ENCODE measurements at regions of chr6 and their contacts with region 1.

Region 1: GRCh38 chr6:97497713-97498331 is 214.8 kb upstream of the MMS22L start:
- DNase-seq: peak; percentile 56
- H3K4me3 ChIP-seq: no peak overlapping the region
- H3K27ac ChIP-seq: no peak overlapping the region
- H3K4me1 ChIP-seq: no peaks in the 10 kb centered on the region
- H3K27me3 ChIP-seq: no peaks in the 10 kb centered on the region
- CTCF ChIP-seq: peak in 3 of 4 experiments; percentile 57 to 68 (median 60)
- POLR2A ChIP-seq: no peak

Region 2: GRCh38 chr6:97535800-97536199 is 38.0 kb after region 1 on chr6:
- intact Hi-C with region 1: no loop called
- DNase-seq: no peak
- H3K4me3 ChIP-seq: no peak overlapping the region
- H3K27ac ChIP-seq: no peak overlapping the region
- H3K4me1 ChIP-seq: no peaks in the 10 kb centered on the region
- H3K27me3 ChIP-seq: no peaks in the 10 kb centered on the region
- CTCF ChIP-seq: no peak
- POLR2A ChIP-seq: no peak

Region 3: DNA sequence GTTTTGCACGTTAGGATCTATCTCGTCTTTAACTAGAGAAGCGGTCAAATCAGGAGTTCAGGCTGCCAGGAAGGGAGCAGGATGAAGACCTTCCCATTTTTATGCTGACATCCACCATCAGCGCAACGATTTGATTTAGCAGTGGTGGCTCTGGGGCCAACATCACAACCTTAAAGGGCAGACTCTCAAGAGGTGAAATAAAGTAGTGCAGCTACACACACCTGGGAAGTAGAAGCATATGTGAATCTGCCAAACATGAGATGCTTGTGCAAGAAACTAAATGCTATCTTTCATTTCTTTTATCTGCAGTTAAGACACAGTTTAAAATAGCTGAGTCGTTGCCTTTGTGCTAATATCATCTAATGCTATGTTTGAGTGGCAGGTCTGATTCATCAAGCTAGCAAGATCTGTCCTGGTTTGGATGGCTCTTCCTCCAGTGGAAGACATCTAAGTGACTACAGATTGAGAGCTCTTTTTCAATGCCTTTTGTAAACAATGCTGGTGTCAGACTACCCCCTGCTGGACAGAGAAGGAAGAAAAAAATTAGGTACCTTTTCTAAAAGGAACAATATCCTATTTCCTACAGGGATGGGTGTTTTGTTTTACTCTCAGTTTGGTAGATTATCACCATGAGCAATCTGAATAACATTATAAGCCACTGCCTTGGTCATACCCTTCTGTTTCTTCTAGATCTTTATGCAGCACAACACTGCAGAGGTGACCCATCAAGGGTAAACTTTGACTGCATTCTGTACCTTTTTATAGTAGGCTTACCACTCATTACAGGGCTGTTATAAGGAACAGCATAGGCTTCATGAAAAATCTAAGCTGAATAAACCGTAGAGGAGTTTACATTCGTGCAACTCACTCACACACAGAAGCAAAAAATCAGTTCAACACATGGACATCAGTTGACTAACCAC is 1621.5 kb after region 1 on chr6:
- intact Hi-C with region 1: loop called (anchors 10 kb)
- DNase-seq: peak; percentile 13
- H3K4me3 ChIP-seq: no peak overlapping the region
- H3K27ac ChIP-seq: no peak overlapping the region
- H3K4me1 ChIP-seq: no peaks in the 10 kb centered on the region
- H3K27me3 ChIP-seq: no peaks in the 10 kb centered on the region
- CTCF ChIP-seq: peak in 3 of 4 experiments; percentile 64 to 71 (median 68)
- POLR2A ChIP-seq: no peak